CD4-positive, alpha-beta T cell (primary cell): ENCODE measurements at regions of chr12 and their contacts with region 1.

Region 1: DNA sequence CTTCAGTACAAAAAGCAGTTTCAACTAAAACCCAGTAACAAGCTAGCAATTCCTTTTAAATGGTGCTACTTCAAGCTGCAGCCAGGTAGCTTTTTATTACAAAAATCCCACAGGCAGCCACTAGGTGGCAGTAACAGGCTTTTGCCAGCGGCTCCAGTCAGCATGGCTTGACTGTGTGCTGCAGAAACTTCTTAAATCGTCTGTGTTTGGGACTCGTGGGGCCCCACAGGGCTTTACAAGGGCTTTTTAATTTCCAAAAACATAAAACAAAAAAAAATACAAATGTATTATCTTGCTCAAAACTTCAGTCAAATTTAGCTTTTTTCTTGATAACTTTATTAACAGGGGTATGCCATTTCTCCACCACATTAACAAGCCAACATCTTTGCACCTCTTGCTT is 3.6 kb upstream of the CLEC4E start:
- DNase-seq: peak; percentile 49 to 84 (median 65)
- ATAC-seq: peak; percentile 85
- H3K4me3 ChIP-seq: no peak overlapping the region
- H3K4me3 Mint-ChIP-seq: no peak overlapping the region
- H3K27ac ChIP-seq: no peak overlapping the region
- H3K27ac Mint-ChIP-seq: no peak overlapping the region
- H3K4me1 ChIP-seq: no peaks in the 10 kb centered on the region
- H3K4me1 Mint-ChIP-seq: peaks cover 6% of the 10 kb centered on the region
- H3K27me3 ChIP-seq: peaks cover 4 to 8% of the 10 kb centered on the region in 2 experiments
- H3K27me3 Mint-ChIP-seq: peaks cover 44% of the 10 kb centered on the region
- CTCF ChIP-seq: peak; percentile 98

Region 2: GRCh38 chr12:8527250-8528130 is 16.8 kb before region 1 on chr12:
- CTCF ChIA-PET with region 1: interaction called, 14 read pairs
- POLR2A ChIA-PET with region 1: no interaction called
- intact Hi-C with region 1: no loop called
- DNase-seq: no peak
- ATAC-seq: no peak
- H3K4me3 ChIP-seq: no peak overlapping the region
- H3K4me3 Mint-ChIP-seq: no peak overlapping the region
- H3K27ac ChIP-seq: no peak overlapping the region
- H3K27ac Mint-ChIP-seq: no peak overlapping the region
- H3K4me1 ChIP-seq: no peaks in the 10 kb centered on the region
- H3K4me1 Mint-ChIP-seq: no peaks in the 10 kb centered on the region
- H3K27me3 ChIP-seq: peaks cover 0 to 5% of the 10 kb centered on the region in 2 experiments
- H3K27me3 Mint-ChIP-seq: peaks cover 24% of the 10 kb centered on the region
- CTCF ChIP-seq: no peak

Region 3: GRCh38 chr12:8554451-8555195 is 10.3 kb after region 1 on chr12:
- CTCF ChIA-PET with region 1: interaction called, 14 read pairs
- POLR2A ChIA-PET with region 1: interaction called, 3 read pairs
- intact Hi-C with region 1: no loop called
- DNase-seq: no peak
- ATAC-seq: no peak
- H3K4me3 ChIP-seq: no peak overlapping the region
- H3K4me3 Mint-ChIP-seq: no peak overlapping the region
- H3K27ac ChIP-seq: no peak overlapping the region
- H3K27ac Mint-ChIP-seq: no peak overlapping the region
- H3K4me1 ChIP-seq: no peaks in the 10 kb centered on the region
- H3K4me1 Mint-ChIP-seq: no peaks in the 10 kb centered on the region
- H3K27me3 ChIP-seq: no peaks in the 10 kb centered on the region
- H3K27me3 Mint-ChIP-seq: no peaks in the 10 kb centered on the region
- CTCF ChIP-seq: no peak

Region 4: DNA sequence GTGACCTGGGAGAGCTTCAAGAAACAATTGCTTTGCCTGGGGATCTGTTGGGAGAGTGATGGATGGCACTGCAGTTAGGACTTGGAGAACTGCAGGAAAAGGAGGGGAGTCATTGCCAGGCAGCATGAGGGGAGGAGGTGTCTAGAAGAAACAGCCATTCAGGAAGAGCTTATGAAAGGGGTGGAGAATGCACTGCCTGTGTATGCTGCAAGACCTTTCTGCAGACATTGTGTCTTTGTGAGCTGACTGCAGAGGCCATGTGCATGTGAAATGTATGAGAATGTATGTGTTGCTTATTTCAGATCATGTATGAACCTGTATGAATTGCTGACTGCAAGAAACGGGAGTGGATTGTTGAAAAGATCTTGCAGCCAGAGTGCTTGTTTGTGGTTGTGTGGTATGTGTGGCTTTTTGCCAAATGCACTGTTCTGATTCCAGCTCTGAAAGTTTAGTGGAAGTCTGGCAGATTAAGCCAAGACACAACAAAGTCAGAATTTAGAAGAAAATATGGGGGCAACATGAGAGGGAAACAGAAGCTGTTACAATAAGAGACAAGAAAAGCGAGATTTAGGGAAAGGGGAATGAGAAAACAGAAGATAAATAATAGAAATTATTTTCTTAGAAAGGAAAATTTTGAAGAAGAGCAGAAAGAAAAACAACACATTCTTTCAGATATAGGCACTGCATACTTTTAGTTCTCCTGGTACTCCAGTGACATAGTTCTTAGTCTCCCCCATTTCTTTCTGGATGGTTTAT is 143.7 kb after region 1 on chr12:
- CTCF ChIA-PET with region 1: no interaction called
- POLR2A ChIA-PET with region 1: no interaction called
- intact Hi-C with region 1: loop called in 1 of 2 experiments (anchors 10 kb)
- DNase-seq: peak in 2 of 14 experiments; percentile 7 to 19
- ATAC-seq: peak; percentile 41
- H3K4me3 ChIP-seq: no peak overlapping the region
- H3K4me3 Mint-ChIP-seq: no peak overlapping the region
- H3K27ac ChIP-seq: no peak overlapping the region
- H3K27ac Mint-ChIP-seq: no peak overlapping the region
- H3K4me1 ChIP-seq: peaks cover 5% of the 10 kb centered on the region
- H3K4me1 Mint-ChIP-seq: peaks cover 14% of the 10 kb centered on the region
- H3K27me3 ChIP-seq: no peaks in the 10 kb centered on the region
- H3K27me3 Mint-ChIP-seq: no peaks in the 10 kb centered on the region
- CTCF ChIP-seq: no peak

Region 5: DNA sequence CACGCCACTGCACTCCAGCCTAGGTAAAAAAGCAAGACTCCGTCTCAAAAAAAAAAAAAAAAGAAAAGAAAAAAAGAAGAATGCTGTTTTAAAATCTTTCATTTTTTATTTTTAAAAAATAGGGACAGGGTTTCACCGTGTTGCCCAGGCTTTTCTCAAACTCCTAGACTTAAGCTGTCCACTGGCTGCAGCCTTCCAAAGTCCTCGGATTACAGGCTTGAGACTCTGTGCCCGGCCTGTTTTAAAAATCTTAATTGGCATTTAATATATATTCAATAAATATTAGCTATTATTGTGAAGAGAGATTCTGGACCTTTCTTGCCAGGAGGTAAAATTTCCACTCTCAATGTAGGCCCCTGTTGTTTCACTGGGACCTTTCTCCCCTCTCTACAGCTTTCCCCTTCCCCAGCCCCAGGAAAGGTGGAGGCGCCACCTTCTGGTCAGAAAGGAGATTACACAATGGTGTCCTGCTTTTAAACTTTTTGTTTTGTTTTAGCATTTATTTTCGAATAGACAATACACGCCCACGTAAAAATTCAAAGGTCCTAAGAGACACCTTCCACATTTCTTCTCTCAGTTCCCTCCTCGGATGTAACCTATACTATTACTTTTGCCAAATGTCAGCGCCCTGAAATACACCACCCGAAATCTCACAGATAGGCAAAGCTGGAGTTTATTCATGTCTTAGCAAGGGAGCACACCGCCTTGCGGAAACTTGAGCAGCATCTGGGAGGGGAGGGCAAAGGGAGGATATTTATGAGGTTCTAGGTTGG is 346.2 kb after region 1 on chr12:
- CTCF ChIA-PET with region 1: interaction called, 17 read pairs
- POLR2A ChIA-PET with region 1: interaction called, 4 read pairs
- intact Hi-C with region 1: loop called (anchors 1 to 2 kb)
- DNase-seq: peak; percentile 38 to 81 (median 52)
- ATAC-seq: peak; percentile 88
- H3K4me3 ChIP-seq: peak overlapping the region; percentile 57
- H3K4me3 Mint-ChIP-seq: peak overlapping the region; percentile 92
- H3K27ac ChIP-seq: no peak overlapping the region
- H3K27ac Mint-ChIP-seq: peak overlapping the region; percentile 29
- H3K4me1 ChIP-seq: peaks cover 3% of the 10 kb centered on the region
- H3K4me1 Mint-ChIP-seq: peaks cover 5% of the 10 kb centered on the region
- H3K27me3 ChIP-seq: no peaks in the 10 kb centered on the region
- H3K27me3 Mint-ChIP-seq: no peaks in the 10 kb centered on the region
- CTCF ChIP-seq: peak; percentile 93